ENCODE measurements at regions of chr3 and their contacts with region 1.

Region 1: GRCh38 chr3:184561061-184561912 is at the start of gene EPHB3:
- DNase-seq: peak; percentile 96
- H3K4me3 Mint-ChIP-seq: peak within 1 kb of the TSS; percentile 49
- H3K27ac Mint-ChIP-seq: peak within 1 kb of the TSS; percentile 0
- H3K4me1 Mint-ChIP-seq: peaks cover 31% of the 10 kb centered on the region
- H3K27me3 Mint-ChIP-seq: peaks cover 15% of the 10 kb centered on the region
- total RNA-seq, gene EPHB3: 0.07 TPM in 1 of 2 experiments, not detected in the other

Region 2: DNA sequence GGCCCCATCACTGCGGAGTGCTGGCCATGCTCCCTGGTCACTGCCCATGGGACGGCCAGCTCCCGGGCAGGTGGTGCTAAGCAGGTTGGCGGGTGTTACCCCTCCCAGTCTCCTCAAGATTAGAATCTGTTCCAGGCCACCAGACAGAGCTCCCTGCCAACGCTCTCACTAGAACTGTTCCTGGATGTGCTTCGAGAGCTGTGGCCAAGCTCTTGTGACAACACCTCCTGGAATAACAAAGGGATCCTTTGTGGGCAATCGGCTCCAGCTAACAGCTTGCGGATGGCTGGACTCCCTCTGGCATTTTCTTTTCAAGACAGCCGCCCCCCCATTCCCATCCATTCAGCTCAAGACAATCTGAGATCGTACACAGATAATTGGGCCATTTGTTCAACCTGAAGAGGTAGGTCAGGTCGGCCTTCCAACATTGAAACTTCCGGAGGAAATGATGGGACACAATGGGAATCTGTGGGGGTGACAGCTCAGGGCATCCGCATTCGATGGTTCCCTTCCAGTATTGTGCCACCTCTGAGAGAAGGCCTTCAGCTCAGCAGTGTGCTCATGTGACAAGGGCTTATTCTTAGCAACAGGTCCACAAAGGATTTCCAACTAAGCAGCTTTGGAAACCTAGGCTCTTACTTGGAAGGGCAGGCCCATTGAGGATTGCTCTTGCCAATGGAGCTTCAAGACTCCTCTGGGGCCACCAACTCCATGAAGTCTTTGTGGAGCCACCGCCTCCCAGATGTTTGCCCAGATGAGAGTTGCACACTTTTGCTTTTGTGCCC is 11.3 kb before region 1 on chr3:
- CTCF ChIA-PET with region 1: interaction called, 33 read pairs
- POLR2A ChIA-PET with region 1: no interaction called
- intact Hi-C with region 1: no loop called
- DNase-seq: no peak
- H3K4me3 Mint-ChIP-seq: no peak overlapping the region
- H3K27ac Mint-ChIP-seq: no peak overlapping the region
- H3K4me1 Mint-ChIP-seq: peaks cover 4% of the 10 kb centered on the region
- H3K27me3 Mint-ChIP-seq: peaks cover 3% of the 10 kb centered on the region

Region 3: DNA sequence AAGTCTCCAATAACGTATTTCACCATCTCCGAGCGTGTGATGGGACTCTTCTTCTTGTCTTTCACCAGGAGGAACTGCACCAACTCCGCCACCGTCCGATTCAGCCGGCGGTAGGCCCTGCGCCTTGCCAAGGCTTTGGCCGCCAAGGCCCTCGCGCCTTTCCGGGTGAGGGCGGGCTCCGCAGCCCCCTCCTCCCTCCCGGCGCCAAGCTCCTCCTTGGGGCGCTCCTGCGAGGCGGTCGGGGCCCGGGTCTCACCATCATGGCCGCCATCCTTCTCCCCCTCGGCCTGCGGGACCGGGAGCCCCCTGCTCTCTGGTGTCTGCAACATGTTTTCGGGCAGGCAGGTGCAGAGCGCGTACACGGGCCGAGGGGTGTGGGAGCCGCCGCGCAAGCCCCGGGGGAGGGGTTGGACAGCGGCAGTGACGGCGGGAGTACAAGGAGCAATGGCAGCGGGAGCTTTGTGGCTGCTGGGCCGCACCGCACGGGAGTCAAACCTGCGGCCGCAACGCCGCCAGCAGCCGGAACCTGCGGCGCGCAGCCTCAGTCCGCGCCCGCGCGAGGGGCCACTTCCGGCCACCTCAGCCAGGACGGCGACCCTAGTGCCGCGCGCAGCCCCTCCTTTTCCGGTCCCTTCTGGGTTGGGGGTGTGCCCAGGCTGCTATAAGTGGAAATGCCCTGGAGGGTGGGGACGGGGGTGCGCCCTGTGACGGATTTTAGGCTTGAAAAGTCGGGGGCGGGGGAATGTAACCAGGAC is 150.4 kb after region 1 on chr3 and contains the start of gene MAGEF1:
- CTCF ChIA-PET with region 1: interaction called, 15 read pairs
- POLR2A ChIA-PET with region 1: interaction called, 4 read pairs
- intact Hi-C with region 1: loop called (anchors 1 kb)
- DNase-seq: peak; percentile 87
- H3K4me3 Mint-ChIP-seq: peak within 1 kb of the TSS; percentile 92
- H3K27ac Mint-ChIP-seq: peak within 1 kb of the TSS; percentile 91
- H3K4me1 Mint-ChIP-seq: peaks cover 39% of the 10 kb centered on the region
- H3K27me3 Mint-ChIP-seq: no peaks in the 10 kb centered on the region
- total RNA-seq, gene MAGEF1: 20.6 to 22.5 TPM

Region 4: GRCh38 chr3:184734903-184735701 is 173.8 kb after region 1 on chr3:
- CTCF ChIA-PET with region 1: interaction called, 14 read pairs
- POLR2A ChIA-PET with region 1: no interaction called
- intact Hi-C with region 1: no loop called
- DNase-seq: no peak
- H3K4me3 Mint-ChIP-seq: no peak overlapping the region
- H3K27ac Mint-ChIP-seq: no peak overlapping the region
- H3K4me1 Mint-ChIP-seq: no peaks in the 10 kb centered on the region
- H3K27me3 Mint-ChIP-seq: peaks cover 9% of the 10 kb centered on the region

Region 5: GRCh38 chr3:184777336-184778004 is 216.2 kb after region 1 on chr3:
- CTCF ChIA-PET with region 1: interaction called, 21 read pairs
- POLR2A ChIA-PET with region 1: no interaction called
- intact Hi-C with region 1: loop called (anchors 1 kb)
- DNase-seq: peak; percentile 88
- H3K4me3 Mint-ChIP-seq: no peak overlapping the region
- H3K27ac Mint-ChIP-seq: no peak overlapping the region
- H3K4me1 Mint-ChIP-seq: no peaks in the 10 kb centered on the region
- H3K27me3 Mint-ChIP-seq: peaks cover 8% of the 10 kb centered on the region

Region 6: GRCh38 chr3:184811999-184812661 is 250.8 kb after region 1 on chr3 and contains the start of gene VPS8:
- CTCF ChIA-PET with region 1: interaction called, 7 read pairs
- POLR2A ChIA-PET with region 1: no interaction called
- intact Hi-C with region 1: loop called (anchors 1 kb)
- DNase-seq: peak; percentile 98
- H3K4me3 Mint-ChIP-seq: peak within 1 kb of the TSS; percentile 87
- H3K27ac Mint-ChIP-seq: peak within 1 kb of the TSS; percentile 84
- H3K4me1 Mint-ChIP-seq: peaks cover 51% of the 10 kb centered on the region
- H3K27me3 Mint-ChIP-seq: no peaks in the 10 kb centered on the region
- total RNA-seq, gene VPS8: 28.7 to 32.3 TPM

Measured in activated CD4-positive, alpha-beta memory T cell treated with anti-CD3 and anti-CD28 coated beads for 36 hours (primary cell).